ENCODE measurements at regions of chr4 and their contacts with region 1.

Region 1: DNA sequence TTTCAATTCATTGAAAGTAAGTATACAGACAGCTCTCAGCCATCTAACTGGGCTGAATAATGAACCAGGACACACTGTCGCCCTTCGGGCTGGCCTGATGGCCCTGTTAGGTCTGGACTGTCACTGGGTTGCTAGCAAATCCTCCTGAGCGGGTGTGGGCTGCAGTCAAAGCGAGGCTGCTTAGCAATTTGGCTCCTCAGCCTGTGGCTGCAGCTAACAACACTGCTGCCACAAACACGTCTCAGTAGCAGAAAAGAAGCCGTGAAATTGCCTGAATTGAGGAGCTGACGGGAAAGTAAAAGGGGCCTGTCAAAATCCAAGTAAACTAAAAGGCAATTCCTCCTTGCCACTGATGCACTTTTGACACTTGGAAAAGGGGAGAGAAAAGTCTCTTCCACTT is 72.8 kb downstream of the SMIM20 start:
- DNase-seq: no peak
- ATAC-seq: no peak
- H3K4me3 ChIP-seq: no peak overlapping the region
- H3K27ac ChIP-seq: no peak overlapping the region
- H3K4me1 ChIP-seq: no peaks in the 10 kb centered on the region; the same call in 1 of the 2 replicates
- H3K27me3 ChIP-seq: no peaks in the 10 kb centered on the region
- CTCF ChIP-seq: no peak

Region 2: GRCh38 chr4:26022346-26023202 is 35.8 kb after region 1 on chr4:
- CTCF ChIA-PET with region 1: no interaction called
- POLR2A ChIA-PET with region 1: no interaction called
- intact Hi-C with region 1: loop called (anchors 5 kb)
- DNase-seq: peak; percentile 87
- ATAC-seq: peak; percentile 91
- H3K4me3 ChIP-seq: peak overlapping the region; percentile 50; the same call in 1 of the 2 replicates
- H3K27ac ChIP-seq: peak overlapping the region; percentile 53
- H3K4me1 ChIP-seq: peaks cover 23% of the 10 kb centered on the region
- H3K27me3 ChIP-seq: no peaks in the 10 kb centered on the region
- CTCF ChIP-seq: no peak

Region 3: GRCh38 chr4:26032630-26033317 is 46.0 kb after region 1 on chr4:
- CTCF ChIA-PET with region 1: no interaction called
- POLR2A ChIA-PET with region 1: no interaction called
- intact Hi-C with region 1: no loop called
- DNase-seq: peak; percentile 55
- ATAC-seq: peak; percentile 56
- H3K4me3 ChIP-seq: no peak overlapping the region
- H3K27ac ChIP-seq: peak overlapping the region; percentile 74
- H3K4me1 ChIP-seq: peaks cover 20% of the 10 kb centered on the region
- H3K27me3 ChIP-seq: no peaks in the 10 kb centered on the region
- CTCF ChIP-seq: no peak

Region 4: DNA sequence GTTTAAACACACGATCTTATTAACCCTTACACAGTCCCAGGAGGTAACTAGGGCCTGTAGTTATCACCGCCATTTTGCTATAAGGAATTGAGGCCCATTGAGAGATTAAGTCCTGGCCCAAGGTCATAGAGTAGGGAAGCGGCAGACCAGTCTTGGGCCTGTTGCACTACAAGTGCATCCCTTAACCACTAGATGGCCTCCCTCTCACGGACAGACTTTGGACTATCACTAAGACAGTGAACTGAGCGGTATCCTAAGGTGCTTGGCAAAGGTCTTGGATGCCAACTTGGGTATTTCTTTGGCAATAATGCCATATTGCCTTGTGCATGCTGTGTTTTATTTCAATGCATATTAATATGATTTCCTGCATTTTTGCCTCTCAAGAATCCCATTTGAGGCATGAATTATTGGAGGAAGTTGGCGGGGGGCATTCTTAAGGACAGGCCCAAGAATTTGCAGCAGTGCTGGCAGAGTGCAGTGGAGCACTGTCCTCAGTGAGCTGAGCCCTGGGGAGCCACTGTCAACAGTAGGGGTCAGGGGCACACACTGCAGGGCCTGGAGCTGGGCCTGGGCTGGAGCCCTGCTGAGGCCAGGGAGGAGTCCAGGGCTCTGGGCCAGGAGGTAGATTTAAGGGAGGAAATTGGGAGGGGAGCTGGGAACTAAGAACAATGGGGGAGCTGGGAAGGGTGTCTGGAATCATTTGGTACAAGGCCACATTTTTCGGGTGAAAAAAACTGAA is 74.6 kb after region 1 on chr4:
- CTCF ChIA-PET with region 1: interaction called, 3 read pairs
- POLR2A ChIA-PET with region 1: no interaction called
- intact Hi-C with region 1: loop called (anchors 5 kb)
- DNase-seq: peak; percentile 77
- ATAC-seq: peak; percentile 99
- H3K4me3 ChIP-seq: no peak overlapping the region
- H3K27ac ChIP-seq: no peak overlapping the region
- H3K4me1 ChIP-seq: no peaks in the 10 kb centered on the region
- H3K27me3 ChIP-seq: no peaks in the 10 kb centered on the region
- CTCF ChIP-seq: peak; percentile 75

Region 5: GRCh38 chr4:26081795-26082498 is 95.1 kb after region 1 on chr4:
- CTCF ChIA-PET with region 1: no interaction called
- POLR2A ChIA-PET with region 1: no interaction called
- intact Hi-C with region 1: no loop called
- DNase-seq: peak; percentile 71
- ATAC-seq: peak; percentile 9; the same call in 1 of the 2 replicates
- H3K4me3 ChIP-seq: no peak overlapping the region
- H3K27ac ChIP-seq: no peak overlapping the region
- H3K4me1 ChIP-seq: peaks cover 46% of the 10 kb centered on the region
- H3K27me3 ChIP-seq: no peaks in the 10 kb centered on the region
- CTCF ChIP-seq: peak; percentile 76

Measured in PC-3 (cell line).